Naive thymus-derived CD4-positive, alpha-beta T cell (primary cell): ENCODE measurements at regions of chr1 and their contacts with region 1.

Region 1: GRCh38 chr1:206583707-206584648 is 28.3 kb downstream of the EIF2D start:
- DNase-seq: peak; percentile 73 to 86 (median 80)
- ATAC-seq: peak; percentile 52
- H3K4me3 ChIP-seq: peak overlapping the region; percentile 11
- H3K4me3 Mint-ChIP-seq: peak overlapping the region; percentile 74 to 90 (median 82)
- H3K27ac ChIP-seq: peak overlapping the region; percentile 90
- H3K27ac Mint-ChIP-seq: peak overlapping the region; percentile 86 to 100 (median 93)
- H3K4me1 ChIP-seq: peaks cover 47 to 56% of the 10 kb centered on the region in 2 donors
- H3K4me1 Mint-ChIP-seq: peaks cover 42 to 92% (median 73%) of the 10 kb centered on the region in 7 donors
- H3K27me3 ChIP-seq: no peaks in the 10 kb centered on the region
- H3K27me3 Mint-ChIP-seq: no peaks in the 10 kb centered on the region

Region 2: GRCh38 chr1:206133751-206134415 is 450.1 kb before region 1 on chr1:
- CTCF ChIA-PET with region 1: no interaction called
- POLR2A ChIA-PET with region 1: no interaction called
- intact Hi-C with region 1: no loop called
- DNase-seq: no peak
- ATAC-seq: no peak
- H3K4me3 ChIP-seq: no peak overlapping the region
- H3K4me3 Mint-ChIP-seq: no peak overlapping the region
- H3K27ac ChIP-seq: no peak overlapping the region
- H3K27ac Mint-ChIP-seq: no peak overlapping the region
- H3K4me1 ChIP-seq: no peaks in the 10 kb centered on the region
- H3K4me1 Mint-ChIP-seq: no peaks in the 10 kb centered on the region
- H3K27me3 ChIP-seq: no peaks in the 10 kb centered on the region
- H3K27me3 Mint-ChIP-seq: peaks cover 7 to 46% (median 11%) of the 10 kb centered on the region in 5 donors

Region 3: DNA sequence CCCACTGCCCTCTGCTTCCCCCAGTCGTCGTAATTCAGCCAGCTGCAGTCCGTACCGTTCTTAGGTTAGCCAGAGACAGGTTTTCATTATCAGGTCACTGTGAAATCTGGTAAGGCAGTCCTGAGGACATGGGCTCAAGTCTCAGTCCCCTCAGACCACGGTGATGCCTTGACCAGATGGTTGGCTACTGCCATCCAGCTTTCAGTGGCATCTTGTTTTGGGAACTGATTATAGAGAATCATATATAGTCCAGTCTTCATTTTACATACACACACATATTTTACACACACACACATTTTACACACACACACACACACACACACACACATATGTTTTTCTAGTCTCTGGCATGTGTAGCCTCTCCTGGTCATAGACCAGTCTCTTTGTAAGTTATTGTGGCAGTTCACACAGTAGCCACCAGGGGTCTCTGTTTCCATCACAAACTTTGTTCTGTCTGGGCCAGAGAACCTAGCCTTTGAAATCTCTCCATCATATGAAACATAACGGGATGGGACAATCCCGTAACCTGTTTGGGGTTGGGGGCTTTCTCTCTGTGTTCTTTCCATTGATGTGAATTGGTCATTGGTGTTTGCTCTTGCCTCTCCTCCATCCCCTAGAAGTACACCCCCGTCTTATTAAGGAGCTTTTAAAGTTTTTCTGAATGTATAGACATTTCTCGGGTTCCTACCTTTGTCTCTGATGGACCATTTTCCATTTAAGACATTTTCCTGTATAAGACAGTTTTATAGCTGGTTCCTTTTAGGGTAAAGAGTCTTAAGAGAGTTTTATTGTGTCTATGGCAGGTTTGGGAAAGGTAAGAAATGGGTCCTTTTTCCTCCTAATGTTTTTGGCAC is 122.1 kb before region 1 on chr1:
- CTCF ChIA-PET with region 1: interaction called, 9 read pairs
- POLR2A ChIA-PET with region 1: no interaction called
- intact Hi-C with region 1: loop called in 1 of 2 experiments (anchors 1 kb)
- DNase-seq: peak in 8 of 9 donors; percentile 59 to 72 (median 66)
- ATAC-seq: peak; percentile 84
- H3K4me3 ChIP-seq: no peak overlapping the region
- H3K4me3 Mint-ChIP-seq: peak overlapping the region in 1 of 10 donors; percentile 38
- H3K27ac ChIP-seq: no peak overlapping the region
- H3K27ac Mint-ChIP-seq: peak overlapping the region in 1 of 9 donors; percentile 38
- H3K4me1 ChIP-seq: peaks cover 10 to 16% of the 10 kb centered on the region in 2 donors
- H3K4me1 Mint-ChIP-seq: peaks cover 20 to 48% (median 31%) of the 10 kb centered on the region in 7 donors
- H3K27me3 ChIP-seq: no peaks in the 10 kb centered on the region
- H3K27me3 Mint-ChIP-seq: no peaks in the 10 kb centered on the region

Region 4: DNA sequence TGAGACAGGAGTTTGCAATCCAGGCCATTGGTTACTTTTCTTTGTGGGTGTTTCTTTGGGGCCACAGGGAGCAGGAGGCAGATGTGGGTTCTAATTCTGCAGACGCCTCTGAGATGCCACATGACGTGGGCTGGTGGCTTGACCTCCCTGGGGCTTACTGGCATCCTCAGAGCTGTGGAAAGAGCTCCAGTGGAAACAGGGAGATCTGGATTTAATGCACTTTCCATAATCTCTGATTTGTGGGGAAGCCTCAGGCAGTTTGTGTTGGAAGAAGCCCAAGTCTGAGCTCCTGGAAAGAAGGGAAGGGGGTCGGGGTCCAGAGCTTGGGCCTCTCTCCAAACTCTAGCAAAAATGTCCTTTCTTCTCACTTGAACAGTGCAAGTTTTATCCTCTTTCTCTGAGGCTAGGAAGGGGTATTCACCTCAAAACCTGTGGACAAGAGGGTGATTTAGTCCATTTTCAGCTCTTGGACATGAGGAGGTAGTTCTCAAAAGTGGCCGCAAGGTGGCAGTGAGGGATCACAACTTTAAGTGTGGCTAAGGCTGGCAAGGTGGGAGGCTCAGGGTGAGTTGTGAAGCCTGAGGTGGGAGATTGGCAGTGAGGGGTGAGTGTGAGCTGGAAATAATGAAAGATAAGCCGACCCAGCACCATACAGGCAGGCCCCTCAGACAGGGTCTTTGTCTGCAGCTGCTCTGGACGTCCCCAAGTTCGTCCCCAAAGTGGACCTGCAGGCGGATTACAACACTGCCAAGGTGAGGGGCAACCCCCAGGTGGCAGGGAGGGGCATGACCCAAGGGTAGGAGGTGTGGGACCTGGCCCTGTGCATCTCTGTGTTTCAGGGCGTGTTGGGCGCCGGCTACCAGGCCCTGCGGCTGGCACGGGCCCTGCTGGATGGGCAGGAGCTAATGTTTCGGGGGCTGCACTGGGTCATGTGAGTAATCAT is 104.5 kb before region 1 on chr1:
- CTCF ChIA-PET with region 1: interaction called, 12 read pairs
- POLR2A ChIA-PET with region 1: interaction called, 3 read pairs
- intact Hi-C with region 1: loop called (anchors 1 to 5 kb)
- DNase-seq: peak in 8 of 9 donors; percentile 43 to 65 (median 56)
- ATAC-seq: peak; percentile 84
- H3K4me3 ChIP-seq: no peak overlapping the region
- H3K4me3 Mint-ChIP-seq: no peak overlapping the region
- H3K27ac ChIP-seq: no peak overlapping the region
- H3K27ac Mint-ChIP-seq: peak overlapping the region; percentile 20 to 85 (median 66)
- H3K4me1 ChIP-seq: peaks cover 0 to 11% of the 10 kb centered on the region in 2 donors
- H3K4me1 Mint-ChIP-seq: peaks cover 8 to 24% (median 17%) of the 10 kb centered on the region in 7 donors
- H3K27me3 ChIP-seq: no peaks in the 10 kb centered on the region
- H3K27me3 Mint-ChIP-seq: no peaks in the 10 kb centered on the region

Region 5: GRCh38 chr1:206507284-206508129 is 76.5 kb before region 1 on chr1 and contains the start of gene RASSF5:
- CTCF ChIA-PET with region 1: interaction called, 5 read pairs
- POLR2A ChIA-PET with region 1: no interaction called
- intact Hi-C with region 1: loop called (anchors 2 kb)
- DNase-seq: peak; percentile 64 to 86 (median 74)
- ATAC-seq: peak; percentile 88
- H3K4me3 ChIP-seq: peak within 1 kb of the TSS; percentile 58
- H3K4me3 Mint-ChIP-seq: peak within 1 kb of the TSS; percentile 72 to 90 (median 82)
- H3K27ac ChIP-seq: peak within 1 kb of the TSS; percentile 41
- H3K27ac Mint-ChIP-seq: peak within 1 kb of the TSS in 8 of 9 donors; percentile 28 to 69 (median 51)
- H3K4me1 ChIP-seq: peaks cover 8 to 29% of the 10 kb centered on the region in 2 donors
- H3K4me1 Mint-ChIP-seq: peaks cover 8 to 59% (median 29%) of the 10 kb centered on the region in 7 donors
- H3K27me3 ChIP-seq: no peaks in the 10 kb centered on the region
- H3K27me3 Mint-ChIP-seq: peaks cover 12 to 30% (median 18%) of the 10 kb centered on the region in 5 donors
- total RNA-seq, gene RASSF5: 155 to 240 (median 218) TPM

Region 6: GRCh38 chr1:206551986-206552326 is 32.0 kb before region 1 on chr1:
- CTCF ChIA-PET with region 1: interaction called, 424 read pairs
- POLR2A ChIA-PET with region 1: interaction called, 722 read pairs
- intact Hi-C with region 1: loop called (anchors 1 kb)
- DNase-seq: peak; percentile 44 to 87 (median 80)
- ATAC-seq: peak; percentile 93
- H3K4me3 ChIP-seq: peak overlapping the region; percentile 9
- H3K4me3 Mint-ChIP-seq: peak overlapping the region; percentile 5 to 82 (median 72)
- H3K27ac ChIP-seq: peak overlapping the region; percentile 69
- H3K27ac Mint-ChIP-seq: peak overlapping the region; percentile 86 to 98 (median 92)
- H3K4me1 ChIP-seq: peaks cover 51% of the 10 kb centered on the region in 2 donors
- H3K4me1 Mint-ChIP-seq: peaks cover 46 to 71% (median 54%) of the 10 kb centered on the region in 7 donors
- H3K27me3 ChIP-seq: no peaks in the 10 kb centered on the region
- H3K27me3 Mint-ChIP-seq: no peaks in the 10 kb centered on the region

Region 7: GRCh38 chr1:207077470-207078377 is 493.7 kb after region 1 on chr1:
- CTCF ChIA-PET with region 1: no interaction called
- POLR2A ChIA-PET with region 1: no interaction called
- intact Hi-C with region 1: no loop called
- DNase-seq: peak; percentile 21 to 85 (median 78)
- ATAC-seq: peak; percentile 98
- H3K4me3 ChIP-seq: no peak overlapping the region
- H3K4me3 Mint-ChIP-seq: no peak overlapping the region
- H3K27ac ChIP-seq: no peak overlapping the region
- H3K27ac Mint-ChIP-seq: peak overlapping the region in 3 of 9 donors; percentile 5 to 63 (median 28)
- H3K4me1 ChIP-seq: no peaks in the 10 kb centered on the region
- H3K4me1 Mint-ChIP-seq: peaks cover 0 to 14% (median 5%) of the 10 kb centered on the region in 7 donors
- H3K27me3 ChIP-seq: no peaks in the 10 kb centered on the region
- H3K27me3 Mint-ChIP-seq: peaks cover 0 to 52% (median 0%) of the 10 kb centered on the region in 5 donors